ENCODE measurements at regions of chr16 and their contacts with region 1.

Region 1: GRCh38 chr16:68902008-68902968 is 59.0 kb downstream of the TANGO6 start:
- DNase-seq: no peak
- ATAC-seq: peak; percentile 26
- H3K4me3 ChIP-seq: no peak overlapping the region
- H3K27ac ChIP-seq: peak overlapping the region in 1 of 2 donors; percentile 28
- H3K4me1 ChIP-seq: no peaks in the 10 kb centered on the region
- H3K27me3 ChIP-seq: no peaks in the 10 kb centered on the region

Region 2: GRCh38 chr16:68873635-68874471 is 28.4 kb before region 1 on chr16:
- intact Hi-C with region 1: no loop called
- DNase-seq: no peak
- ATAC-seq: no peak
- H3K4me3 ChIP-seq: no peak overlapping the region
- H3K27ac ChIP-seq: no peak overlapping the region
- H3K4me1 ChIP-seq: no peaks in the 10 kb centered on the region
- H3K27me3 ChIP-seq: no peaks in the 10 kb centered on the region

Region 3: DNA sequence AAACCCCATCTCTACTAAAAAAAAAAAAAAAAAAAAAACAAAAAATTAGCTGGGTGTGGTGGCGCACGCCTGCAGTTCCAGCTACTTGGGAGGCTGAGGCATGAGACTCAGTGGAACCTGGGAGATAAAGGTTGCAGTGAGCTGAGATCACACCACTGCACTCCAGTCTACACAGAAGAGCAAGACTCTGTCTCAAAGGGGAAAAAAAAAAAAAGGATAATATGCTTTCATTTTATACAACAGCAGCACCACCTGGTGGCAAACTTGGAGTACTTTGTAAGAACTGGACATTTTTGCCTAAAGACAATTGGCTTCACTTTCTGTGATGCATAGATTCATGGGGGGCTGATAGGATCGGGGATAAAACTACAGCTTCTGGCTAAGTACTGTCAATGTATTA is 221.6 kb after region 1 on chr16:
- intact Hi-C with region 1: loop called in 1 of 2 experiments (anchors 5 kb)
- DNase-seq: peak in 1 of 2 donors; percentile 63
- ATAC-seq: no peak
- H3K4me3 ChIP-seq: no peak overlapping the region
- H3K27ac ChIP-seq: no peak overlapping the region
- H3K4me1 ChIP-seq: no peaks in the 10 kb centered on the region
- H3K27me3 ChIP-seq: no peaks in the 10 kb centered on the region